Endothelial cell of umbilical vein (primary cell): ENCODE measurements at regions of chr1 and their contacts with region 1.

Region 1: GRCh38 chr1:199113265-199113869 is 474.5 kb downstream of the PTPRC start:
- DNase-seq: peak; percentile 85
- H3K4me3 ChIP-seq: no peak overlapping the region
- H3K27ac ChIP-seq: no peak overlapping the region
- H3K4me1 ChIP-seq: no peaks in the 10 kb centered on the region
- H3K27me3 ChIP-seq: no peaks in the 10 kb centered on the region
- CTCF ChIP-seq: peak; percentile 81 to 83
- POLR2A ChIP-seq: no peak

Region 2: DNA sequence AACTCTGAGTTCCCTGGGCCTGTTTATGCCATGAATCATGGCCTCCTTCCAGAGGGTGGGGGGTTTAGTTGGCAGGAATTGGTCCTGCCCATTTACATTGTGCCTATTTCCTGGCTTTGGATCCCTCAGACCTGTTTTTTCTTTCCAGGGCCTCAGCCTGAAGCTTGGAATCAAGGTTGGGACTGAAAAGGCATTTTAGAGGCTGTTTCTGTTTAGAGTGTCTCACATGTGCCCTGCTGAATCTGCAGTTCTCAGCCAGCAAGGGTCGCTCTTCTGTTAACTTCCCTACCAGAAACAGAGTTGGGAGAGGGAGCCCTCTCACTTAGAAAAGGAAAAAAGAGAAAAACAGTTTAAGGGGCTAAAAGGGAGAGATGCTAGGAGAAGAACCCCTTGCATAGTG is 283.4 kb before region 1 on chr1:
- CTCF ChIA-PET with region 1: interaction called, 25 read pairs
- POLR2A ChIA-PET with region 1: no interaction called
- dilution Hi-C with region 1: no loop called
- intact Hi-C with region 1: loop called (anchors 1 kb)
- DNase-seq: peak; percentile 66
- H3K4me3 ChIP-seq: no peak overlapping the region
- H3K27ac ChIP-seq: no peak overlapping the region
- H3K4me1 ChIP-seq: peaks cover 13% of the 10 kb centered on the region
- H3K27me3 ChIP-seq: no peaks in the 10 kb centered on the region
- CTCF ChIP-seq: peak in 1 of 2 donors; percentile 25
- POLR2A ChIP-seq: no peak

Region 3: GRCh38 chr1:199020904-199021303 is 92.5 kb before region 1 on chr1:
- CTCF ChIA-PET with region 1: no interaction called
- POLR2A ChIA-PET with region 1: no interaction called
- dilution Hi-C with region 1: no loop called
- intact Hi-C with region 1: no loop called
- DNase-seq: peak; percentile 6
- H3K4me3 ChIP-seq: no peak overlapping the region
- H3K27ac ChIP-seq: no peak overlapping the region
- H3K4me1 ChIP-seq: no peaks in the 10 kb centered on the region
- H3K27me3 ChIP-seq: no peaks in the 10 kb centered on the region
- CTCF ChIP-seq: no peak
- POLR2A ChIP-seq: no peak

Region 4: DNA sequence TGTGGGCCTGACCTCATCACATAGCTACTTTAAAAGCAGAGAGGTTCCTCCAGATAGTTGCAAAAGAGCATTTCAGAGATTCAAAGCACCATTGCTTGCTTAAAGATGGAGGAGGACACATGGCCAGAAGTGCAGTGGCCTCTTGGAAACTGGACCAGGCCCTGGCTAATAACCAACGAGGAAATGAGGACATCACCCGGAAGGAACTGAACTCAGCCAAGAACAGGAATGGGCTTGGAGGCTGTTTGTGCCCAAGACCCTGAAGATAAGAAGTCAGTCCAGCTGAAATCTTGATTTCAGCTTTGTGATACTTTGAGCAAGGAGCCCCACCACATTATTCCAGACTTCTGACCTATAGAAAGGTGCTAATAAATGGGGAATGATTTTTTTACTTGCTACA is 37.6 kb before region 1 on chr1:
- CTCF ChIA-PET with region 1: interaction called, 10 read pairs
- POLR2A ChIA-PET with region 1: no interaction called
- dilution Hi-C with region 1: no loop called
- intact Hi-C with region 1: no loop called
- DNase-seq: peak; percentile 55
- H3K4me3 ChIP-seq: no peak overlapping the region
- H3K27ac ChIP-seq: no peak overlapping the region
- H3K4me1 ChIP-seq: peaks cover 11% of the 10 kb centered on the region
- H3K27me3 ChIP-seq: no peaks in the 10 kb centered on the region
- CTCF ChIP-seq: no peak
- POLR2A ChIP-seq: no peak

Region 5: DNA sequence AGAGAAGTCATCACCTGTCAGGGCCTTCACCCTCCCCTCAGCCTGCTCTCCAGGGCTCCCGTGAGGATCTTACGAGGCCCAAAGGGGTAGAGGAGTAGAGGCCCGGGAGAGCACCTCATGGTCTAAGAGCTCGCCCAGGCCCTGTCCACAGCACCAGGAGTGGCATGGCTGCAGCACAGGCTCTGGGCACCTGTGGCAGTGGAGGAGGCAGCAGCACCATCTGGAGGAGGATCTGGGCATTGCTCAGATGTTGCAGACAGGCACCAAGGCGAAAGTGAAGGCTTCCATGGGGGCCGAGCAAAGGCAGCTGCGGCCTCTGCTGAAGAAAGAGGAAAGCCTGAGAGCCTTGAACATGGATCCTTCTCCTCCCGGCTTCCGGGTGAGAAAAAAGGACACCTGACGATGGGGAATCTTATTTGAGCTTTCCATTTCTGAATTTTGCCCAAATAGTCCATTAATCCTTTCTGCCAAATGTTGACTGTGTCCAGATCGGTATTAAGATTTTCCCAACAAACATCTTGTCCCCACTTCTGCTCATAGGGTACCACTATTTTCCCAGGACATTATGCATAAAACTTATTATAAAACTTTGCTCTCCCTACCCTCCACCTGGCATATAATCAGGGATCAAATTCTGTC is 130.2 kb after region 1 on chr1:
- CTCF ChIA-PET with region 1: interaction called, 16 read pairs
- POLR2A ChIA-PET with region 1: no interaction called
- dilution Hi-C with region 1: no loop called
- intact Hi-C with region 1: loop called (anchors 2 kb)
- DNase-seq: peak; percentile 58
- H3K4me3 ChIP-seq: no peak overlapping the region
- H3K27ac ChIP-seq: no peak overlapping the region
- H3K4me1 ChIP-seq: no peaks in the 10 kb centered on the region
- H3K27me3 ChIP-seq: no peaks in the 10 kb centered on the region
- CTCF ChIP-seq: peak; percentile 67 to 87
- POLR2A ChIP-seq: no peak

Region 6: GRCh38 chr1:199302554-199302953 is 189.2 kb after region 1 on chr1:
- CTCF ChIA-PET with region 1: no interaction called
- POLR2A ChIA-PET with region 1: no interaction called
- dilution Hi-C with region 1: no loop called
- intact Hi-C with region 1: no loop called
- DNase-seq: peak; percentile 85
- H3K4me3 ChIP-seq: no peak overlapping the region
- H3K27ac ChIP-seq: peak overlapping the region; percentile 61
- H3K4me1 ChIP-seq: peaks cover 37% of the 10 kb centered on the region
- H3K27me3 ChIP-seq: no peaks in the 10 kb centered on the region
- CTCF ChIP-seq: no peak
- POLR2A ChIP-seq: no peak

Region 7: GRCh38 chr1:199463521-199464128 is 350.3 kb after region 1 on chr1:
- CTCF ChIA-PET with region 1: interaction called, 24 read pairs
- POLR2A ChIA-PET with region 1: no interaction called
- dilution Hi-C with region 1: no loop called
- intact Hi-C with region 1: loop called (anchors 1 kb)
- DNase-seq: peak; percentile 71
- H3K4me3 ChIP-seq: no peak overlapping the region
- H3K27ac ChIP-seq: no peak overlapping the region
- H3K4me1 ChIP-seq: peaks cover 5% of the 10 kb centered on the region
- H3K27me3 ChIP-seq: no peaks in the 10 kb centered on the region
- CTCF ChIP-seq: peak; percentile 67 to 68
- POLR2A ChIP-seq: no peak